HepG2 (cell line): ENCODE measurements at regions of chr1 and their contacts with region 1.

Region 1: DNA sequence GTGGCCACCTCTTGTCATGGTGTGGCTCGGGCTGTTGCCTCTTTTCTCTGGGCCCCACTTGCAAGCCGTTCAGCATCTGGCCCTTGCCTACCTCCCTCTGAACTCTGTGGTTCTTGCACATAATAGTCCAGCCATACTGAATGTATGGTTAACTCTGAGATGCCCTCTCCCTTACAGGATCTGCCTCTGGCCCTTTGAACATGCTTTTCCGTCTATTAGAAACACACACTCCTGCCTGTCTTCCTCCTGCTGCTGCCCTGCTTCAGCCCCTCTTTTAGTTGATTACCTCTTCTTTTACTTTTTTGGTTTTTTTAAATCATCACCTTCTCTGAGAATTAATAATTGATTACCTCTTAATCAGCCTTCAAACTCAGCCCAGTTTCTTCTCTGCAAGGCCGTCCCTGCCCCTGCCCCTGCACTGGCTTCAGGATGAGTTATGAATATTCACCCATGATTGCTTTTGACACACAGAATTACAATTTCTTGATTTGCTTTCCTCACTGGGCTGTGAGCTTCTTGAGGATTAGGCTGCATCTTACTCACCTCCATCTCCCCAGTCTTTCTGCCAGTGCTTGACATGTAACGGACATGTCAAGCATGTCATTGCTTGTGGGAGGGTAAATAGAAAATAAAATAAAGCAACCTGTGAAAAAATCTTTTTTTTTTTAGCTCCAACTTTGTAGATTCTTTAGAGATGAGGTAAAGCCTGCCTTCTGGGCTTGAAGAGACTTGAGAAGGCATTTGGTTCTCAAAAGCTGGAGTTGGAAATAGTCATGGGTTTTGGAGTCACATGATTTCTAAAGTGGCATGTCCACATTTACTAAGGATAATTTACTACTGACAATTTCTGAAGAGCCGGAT is 158.3 kb downstream of the PLXNA2 start:
- DNase-seq: no peak
- ATAC-seq: no peak
- H3K4me3 ChIP-seq: no peak overlapping the region
- H3K27ac ChIP-seq: no peak overlapping the region
- H3K4me1 ChIP-seq: no peaks in the 10 kb centered on the region
- H3K27me3 ChIP-seq: no peaks in the 10 kb centered on the region
- CTCF ChIP-seq: no peak
- EP300 ChIP-seq: no peak
- POLR2A ChIP-seq: no peak
- RAD21 ChIP-seq: no peak

Region 2: GRCh38 chr1:207878939-207879338 is 206.9 kb before region 1 on chr1:
- CTCF ChIA-PET with region 1: no interaction called
- POLR2A ChIA-PET with region 1: no interaction called
- in situ Hi-C with region 1: no loop called
- intact Hi-C with region 1: no loop called
- DNase-seq: no peak
- ATAC-seq: no peak
- H3K4me3 ChIP-seq: no peak overlapping the region
- H3K27ac ChIP-seq: no peak overlapping the region
- H3K4me1 ChIP-seq: peaks cover 6% of the 10 kb centered on the region; the same call in 1 of the 2 replicates
- H3K27me3 ChIP-seq: peaks cover 0 to 13% of the 10 kb centered on the region in 2 experiments; a peak in 3 of 5 replicates
- CTCF ChIP-seq: no peak
- EP300 ChIP-seq: no peak
- POLR2A ChIP-seq: no peak
- RAD21 ChIP-seq: no peak

Region 3: DNA sequence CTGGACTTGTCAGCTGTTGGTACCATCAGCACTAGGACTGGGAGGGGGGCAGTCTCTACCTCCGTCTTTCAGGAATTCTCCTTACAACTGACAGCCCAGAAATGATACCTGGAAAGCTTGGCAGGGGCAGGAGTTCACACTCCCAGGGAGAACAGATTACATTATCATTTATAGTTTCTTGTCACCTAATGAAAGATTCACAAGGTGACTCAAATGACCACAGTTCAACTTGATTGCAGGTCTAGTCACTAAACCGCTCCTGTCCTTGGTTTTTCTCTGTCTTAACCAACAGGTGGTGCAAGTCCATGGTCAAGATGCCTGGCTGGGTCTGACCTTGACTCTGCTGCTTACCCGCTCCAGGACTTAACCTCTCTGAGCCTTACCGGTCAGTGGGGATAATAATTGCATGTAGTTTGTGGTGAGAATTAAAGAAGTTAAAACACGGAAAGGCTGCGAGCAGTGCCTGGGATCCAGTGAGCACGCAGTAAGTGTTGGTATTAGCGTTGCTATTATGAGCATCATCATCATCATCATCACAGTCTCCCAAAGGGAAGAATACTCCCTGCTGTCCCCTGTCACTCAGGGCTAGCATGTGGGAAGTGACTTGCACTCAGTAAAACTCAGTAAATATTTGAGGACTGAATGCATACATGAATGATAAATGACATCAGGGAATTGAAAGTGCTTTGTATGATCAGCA is 49.6 kb before region 1 on chr1:
- CTCF ChIA-PET with region 1: no interaction called
- POLR2A ChIA-PET with region 1: no interaction called
- in situ Hi-C with region 1: loop called (anchors 5 kb)
- intact Hi-C with region 1: no loop called
- DNase-seq: peak; percentile 30
- ATAC-seq: peak; percentile 38; the same call in 1 of the 3 replicates
- H3K4me3 ChIP-seq: no peak overlapping the region
- H3K27ac ChIP-seq: no peak overlapping the region
- H3K4me1 ChIP-seq: no peaks in the 10 kb centered on the region
- H3K27me3 ChIP-seq: no peaks in the 10 kb centered on the region
- CTCF ChIP-seq: peak; percentile 57
- EP300 ChIP-seq: no peak
- POLR2A ChIP-seq: no peak
- RAD21 ChIP-seq: no peak

Region 4: GRCh38 chr1:208132287-208132883 is 46.5 kb after region 1 on chr1:
- CTCF ChIA-PET with region 1: no interaction called
- POLR2A ChIA-PET with region 1: no interaction called
- in situ Hi-C with region 1: no loop called
- intact Hi-C with region 1: no loop called
- DNase-seq: peak; percentile 54
- ATAC-seq: peak; percentile 96
- H3K4me3 ChIP-seq: no peak overlapping the region
- H3K27ac ChIP-seq: no peak overlapping the region
- H3K4me1 ChIP-seq: peaks cover 43% of the 10 kb centered on the region
- H3K27me3 ChIP-seq: no peaks in the 10 kb centered on the region
- CTCF ChIP-seq: peak; percentile 83
- EP300 ChIP-seq: no peak
- POLR2A ChIP-seq: no peak
- RAD21 ChIP-seq: peak; percentile 81